CD14-positive monocyte (primary cell): ENCODE measurements at regions of chr6 and their contacts with region 1.

Region 1: DNA sequence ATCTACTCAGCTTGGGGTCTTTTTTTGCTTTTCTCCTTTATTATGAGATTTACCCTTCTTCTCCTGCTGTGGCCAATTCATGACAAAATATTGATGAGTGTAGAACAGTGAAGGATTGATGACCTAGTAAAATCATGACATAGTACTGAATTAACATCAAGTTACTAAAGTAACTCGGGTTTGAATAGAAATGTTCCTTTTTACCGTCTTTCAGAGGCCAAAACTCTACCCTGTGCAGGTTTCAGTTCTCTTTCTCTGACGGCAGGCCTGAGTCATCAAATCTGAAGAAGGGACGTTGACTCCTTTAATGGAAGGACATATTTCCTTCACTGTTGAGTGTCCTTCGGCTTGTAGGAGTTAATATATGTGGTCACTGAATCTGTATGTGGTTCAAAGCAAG is 80.7 kb downstream of the RREB1 start:
- DNase-seq: peak; percentile 81 to 88 (median 88)
- H3K4me3 ChIP-seq: peak overlapping the region in 1 of 3 experiments; percentile 33
- H3K4me3 Mint-ChIP-seq: peak overlapping the region in 1 of 2 donors; percentile 31
- H3K27ac ChIP-seq: peak overlapping the region; percentile 83 to 89
- H3K27ac Mint-ChIP-seq: peak overlapping the region; percentile 93 to 98 (median 97)
- H3K4me1 ChIP-seq: peaks cover 38% of the 10 kb centered on the region in 2 donors
- H3K4me1 Mint-ChIP-seq: peaks cover 39% of the 10 kb centered on the region
- H3K27me3 ChIP-seq: no peaks in the 10 kb centered on the region
- H3K27me3 Mint-ChIP-seq: no peaks in the 10 kb centered on the region
- CTCF ChIP-seq: no peak

Region 2: DNA sequence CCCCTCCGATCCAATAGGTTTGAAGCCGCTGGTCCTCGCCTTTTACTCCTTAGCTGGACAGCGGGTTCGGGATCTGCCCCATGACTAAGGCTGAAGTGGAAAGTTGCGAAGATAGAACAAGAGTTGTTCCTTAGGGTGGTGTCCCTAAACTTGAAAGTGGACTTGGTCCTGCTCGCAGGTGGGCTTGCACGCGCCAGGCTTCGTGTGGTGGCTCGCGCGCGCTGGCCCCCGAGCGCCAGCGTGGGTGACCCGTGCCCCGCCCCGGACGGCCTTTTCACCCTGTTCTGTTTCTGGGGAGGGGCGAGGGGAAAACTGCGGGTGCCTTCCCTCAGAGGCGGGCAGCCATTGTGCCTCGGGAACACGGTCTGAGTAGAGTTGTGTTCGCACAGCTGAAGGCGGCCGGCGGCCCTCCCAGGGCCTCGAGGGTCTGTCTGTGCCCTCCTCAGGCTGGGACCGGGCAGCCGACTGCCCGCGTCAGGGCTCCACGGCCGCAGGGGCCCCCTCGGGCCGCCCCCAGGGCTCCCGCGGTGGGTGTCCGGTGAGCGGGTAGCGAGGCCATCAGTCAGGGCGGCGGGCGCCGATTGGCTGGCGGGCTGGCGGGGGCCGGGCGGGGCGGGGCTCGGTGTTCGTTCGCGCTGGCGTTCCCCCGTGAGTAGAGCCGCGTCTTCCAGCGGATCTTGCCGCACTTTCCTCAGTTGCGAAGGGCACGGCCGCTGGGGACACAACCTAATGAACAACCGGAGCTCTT is 47.7 kb before region 1 on chr6:
- intact Hi-C with region 1: loop called (anchors 2 to 5 kb)
- DNase-seq: peak; percentile 69 to 81 (median 69)
- H3K4me3 ChIP-seq: peak overlapping the region; percentile 47 to 79 (median 53)
- H3K4me3 Mint-ChIP-seq: peak overlapping the region; percentile 75 to 87
- H3K27ac ChIP-seq: peak overlapping the region; percentile 66 to 93
- H3K27ac Mint-ChIP-seq: peak overlapping the region; percentile 86 to 95 (median 92)
- H3K4me1 ChIP-seq: peaks cover 48 to 76% of the 10 kb centered on the region in 2 donors
- H3K4me1 Mint-ChIP-seq: peaks cover 70% of the 10 kb centered on the region
- H3K27me3 ChIP-seq: no peaks in the 10 kb centered on the region
- H3K27me3 Mint-ChIP-seq: no peaks in the 10 kb centered on the region
- CTCF ChIP-seq: no peak

Region 3: GRCh38 chr6:7145885-7146828 is 42.3 kb before region 1 on chr6:
- intact Hi-C with region 1: loop called (anchors 2 to 5 kb)
- DNase-seq: peak; percentile 58 to 66 (median 65)
- H3K4me3 ChIP-seq: peak overlapping the region in 1 of 3 experiments; percentile 47
- H3K4me3 Mint-ChIP-seq: peak overlapping the region; percentile 66 to 67
- H3K27ac ChIP-seq: peak overlapping the region; percentile 83 to 87
- H3K27ac Mint-ChIP-seq: peak overlapping the region; percentile 84 to 97 (median 95)
- H3K4me1 ChIP-seq: peaks cover 38 to 63% of the 10 kb centered on the region in 2 donors
- H3K4me1 Mint-ChIP-seq: peaks cover 76% of the 10 kb centered on the region
- H3K27me3 ChIP-seq: no peaks in the 10 kb centered on the region
- H3K27me3 Mint-ChIP-seq: peaks cover 0 to 2% (median 0%) of the 10 kb centered on the region in 3 donors
- CTCF ChIP-seq: no peak